ENCODE measurements at regions of chr10 and their contacts with region 1.

Region 1: GRCh38 chr10:66627156-66627555 is 298.7 kb upstream of the LRRTM3 start:
- DNase-seq: no peak
- ATAC-seq: peak; percentile 42

Region 2: DNA sequence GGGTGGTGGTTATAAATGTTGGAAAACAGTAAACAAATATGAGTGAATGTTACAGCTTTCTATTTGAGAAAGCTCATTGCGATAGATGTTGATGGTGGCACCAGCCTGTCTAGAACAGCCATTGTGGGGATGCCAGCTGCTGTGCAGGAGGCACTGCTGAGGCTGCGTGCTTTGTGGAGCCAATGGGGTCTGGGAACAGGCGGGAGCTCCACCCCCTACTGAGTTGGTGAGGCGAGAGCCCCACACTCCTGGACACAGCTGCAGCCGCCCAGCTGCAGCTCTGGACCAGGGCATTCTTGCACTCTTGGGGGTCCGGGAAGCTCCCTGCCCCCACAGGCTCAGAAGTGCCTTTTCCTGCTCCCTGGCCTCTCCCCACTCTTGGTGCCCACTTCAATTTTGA is 848.4 kb before region 1 on chr10:
- intact Hi-C with region 1: no loop called
- DNase-seq: no peak
- ATAC-seq: no peak

Region 3: DNA sequence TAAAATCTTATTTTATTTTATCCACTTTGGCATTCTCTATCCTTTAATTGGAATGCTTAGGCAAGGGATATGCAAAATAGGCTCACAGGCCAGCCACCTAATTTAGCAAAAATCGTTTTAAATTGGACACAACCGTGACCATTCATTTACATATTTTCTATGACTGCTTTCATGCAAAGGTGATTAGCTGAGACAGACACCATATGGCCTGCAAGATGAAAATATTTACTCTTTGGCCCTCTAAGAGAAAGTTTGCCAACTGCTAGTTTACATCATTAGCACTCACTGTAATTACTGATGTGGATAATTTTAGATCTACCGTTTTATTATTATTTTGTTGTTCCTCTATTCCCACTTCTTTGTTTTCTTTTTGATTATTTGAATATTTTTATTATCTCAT is 76.8 kb before region 1 on chr10:
- intact Hi-C with region 1: no loop called
- DNase-seq: no peak
- ATAC-seq: no peak

Region 4: DNA sequence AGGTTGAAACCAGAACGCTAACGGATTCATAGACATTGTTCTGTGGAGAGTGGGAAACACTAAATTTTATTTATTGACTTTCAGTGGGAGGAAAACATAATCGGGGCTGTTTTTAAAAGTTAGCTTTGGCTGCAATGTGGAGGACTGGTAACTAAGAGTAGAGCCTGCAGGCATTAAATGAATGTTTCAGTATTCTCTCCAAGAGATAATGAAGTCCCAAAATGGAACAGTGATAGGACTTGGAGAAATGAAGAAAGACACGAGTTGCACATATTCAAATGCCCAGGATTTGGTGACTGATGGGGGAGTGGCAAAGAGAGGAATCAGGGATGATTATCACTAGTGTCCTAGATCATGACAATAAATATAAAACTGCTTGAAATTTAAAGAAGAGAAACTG is 61.2 kb before region 1 on chr10:
- intact Hi-C with region 1: loop called (anchors 2 kb)
- DNase-seq: no peak
- ATAC-seq: no peak

Measured in Right ventricle myocardium inferior (tissue), 1 donor.